Posterior vena cava (tissue), 2 donors: ENCODE measurements at regions of chr10 and their contacts with region 1.

Region 1: DNA sequence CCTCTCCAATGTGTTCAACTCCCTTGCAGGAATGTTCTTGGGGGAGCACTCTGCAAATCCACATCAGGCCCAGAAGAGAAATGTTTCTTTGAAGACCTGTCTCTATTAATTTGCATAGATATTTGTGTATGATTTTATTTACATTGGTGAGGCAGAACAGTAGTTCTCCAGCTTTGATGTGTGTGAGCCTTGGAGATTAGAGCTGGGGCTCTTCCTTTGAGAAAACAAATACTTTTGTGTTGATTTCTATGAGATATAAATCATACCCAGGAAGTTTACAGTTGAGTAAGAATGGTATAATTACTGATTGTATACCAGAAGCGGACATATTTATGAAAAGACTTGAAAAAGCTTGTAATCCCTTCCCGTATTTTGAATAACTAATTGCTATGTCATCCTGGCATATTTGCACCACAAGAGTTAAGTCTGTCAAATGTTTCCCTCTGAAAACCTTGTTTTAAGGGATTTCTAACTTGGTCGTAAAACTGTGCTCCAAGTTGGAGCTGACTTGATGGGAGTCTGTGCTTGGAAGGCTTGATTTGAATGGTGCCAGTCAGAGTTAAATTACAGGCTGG is 468.5 kb downstream of the LRMDA start:
- DNase-seq: no peak

Region 2: GRCh38 chr10:74589226-74589673 is 1310.7 kb before region 1 on chr10:
- intact Hi-C with region 1: loop called in 1 of 2 experiments (anchors 5 kb)
- DNase-seq: peak; percentile 92

Region 3: DNA sequence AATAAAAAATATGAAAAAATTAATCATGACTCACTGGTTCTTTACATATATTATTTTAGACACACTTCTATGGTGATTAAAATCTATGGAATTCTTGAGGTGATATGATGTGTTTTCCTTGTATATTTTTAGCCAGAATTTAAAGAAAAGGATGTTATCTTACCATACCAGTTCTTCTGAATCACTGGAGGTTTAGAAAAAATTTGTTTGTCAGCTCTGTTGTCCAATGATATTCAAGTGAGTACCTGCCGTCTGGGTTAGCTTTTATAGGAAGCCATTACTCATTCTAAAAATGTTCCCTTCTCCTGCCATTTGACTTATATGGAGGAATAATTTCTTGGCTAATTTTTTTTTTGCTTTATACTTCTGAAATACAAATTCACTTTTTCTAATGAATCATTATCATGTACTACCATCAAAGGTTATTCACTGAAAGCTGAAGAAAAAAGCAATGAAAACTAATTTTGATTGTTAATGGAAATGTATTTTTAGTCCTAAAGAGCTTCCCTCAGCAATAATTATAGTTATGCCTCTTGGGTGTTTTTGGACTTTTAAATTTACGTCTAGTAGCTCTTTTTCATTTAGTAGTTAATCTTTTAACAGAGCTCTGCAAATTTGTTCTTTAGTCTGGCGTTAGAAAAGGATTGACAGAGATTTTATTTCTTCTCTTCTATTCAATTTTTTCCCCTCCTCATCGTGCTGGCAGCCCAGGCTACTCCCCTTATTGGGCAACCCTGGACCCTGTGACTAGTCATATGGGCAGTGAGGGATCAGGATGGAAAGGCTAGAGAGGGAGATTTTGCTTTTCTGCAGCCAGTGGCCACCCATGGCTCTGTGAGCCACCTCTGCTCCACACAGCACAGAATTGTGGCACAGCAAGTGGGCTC is 34.2 kb before region 1 on chr10:
- intact Hi-C with region 1: loop called in 1 of 2 experiments (anchors 1 kb)
- DNase-seq: no peak